Psoas muscle (tissue), 8 donors: ENCODE measurements at regions of chr9 and their contacts with region 1.

Region 1: GRCh38 chr9:99162759-99163364 is 57.9 kb downstream of the TGFBR1 start:
- DNase-seq: no peak
- ATAC-seq: peak in 1 of 4 donors; percentile 56
- H3K4me3 ChIP-seq: no peak overlapping the region
- H3K27ac ChIP-seq: no peak overlapping the region
- H3K4me1 ChIP-seq: no peaks in the 10 kb centered on the region
- H3K27me3 ChIP-seq: no peaks in the 10 kb centered on the region
- CTCF ChIP-seq: peak; percentile 57

Region 2: DNA sequence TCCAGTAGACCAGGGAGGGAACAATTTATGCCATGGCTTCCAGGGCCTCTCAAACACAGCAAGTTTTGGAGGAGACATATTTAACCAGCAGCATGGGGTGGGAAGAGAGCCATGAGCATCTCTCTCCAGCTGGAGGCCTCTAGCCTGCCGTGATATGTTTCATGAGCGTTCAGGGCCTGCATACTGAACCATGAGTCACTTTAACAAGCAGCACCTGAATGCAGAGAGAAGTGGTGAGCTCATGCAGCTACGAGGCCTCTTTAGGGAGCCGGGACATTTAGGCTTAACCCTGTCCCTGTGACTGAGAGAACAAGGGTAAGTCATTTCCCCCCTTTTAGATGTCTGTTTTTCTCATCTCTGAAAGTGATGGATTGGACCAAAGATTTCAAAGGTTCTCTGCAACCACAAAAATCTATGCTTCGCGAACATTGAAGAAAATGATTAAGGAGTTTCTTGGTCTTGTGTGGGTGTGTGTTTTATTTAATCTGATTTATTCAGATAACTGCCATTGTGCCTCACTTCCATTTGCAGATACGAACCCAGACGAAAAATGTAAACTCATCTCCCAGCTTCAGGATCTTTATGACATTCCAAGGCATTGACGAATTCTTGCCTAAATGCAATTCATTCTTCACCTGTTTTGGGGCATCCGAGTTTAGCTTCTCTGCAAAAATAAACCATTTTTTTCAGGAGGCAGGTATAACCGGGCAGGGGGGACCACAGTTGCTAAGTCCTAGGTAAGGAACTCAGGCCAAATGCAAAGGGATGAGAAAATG is 611.2 kb before region 1 on chr9:
- intact Hi-C with region 1: no loop called
- DNase-seq: no peak
- ATAC-seq: no peak
- H3K4me3 ChIP-seq: no peak overlapping the region
- H3K27ac ChIP-seq: no peak overlapping the region
- H3K4me1 ChIP-seq: no peaks in the 10 kb centered on the region
- H3K27me3 ChIP-seq: peaks cover 0 to 5% (median 0%) of the 10 kb centered on the region in 3 donors
- CTCF ChIP-seq: no peak

Region 3: GRCh38 chr9:99085949-99086948 is 76.6 kb before region 1 on chr9:
- intact Hi-C with region 1: no loop called
- DNase-seq: peak in 1 of 2 donors; percentile 35
- ATAC-seq: peak; percentile 43 to 68 (median 59)
- H3K4me3 ChIP-seq: no peak overlapping the region
- H3K27ac ChIP-seq: no peak overlapping the region
- H3K4me1 ChIP-seq: no peaks in the 10 kb centered on the region
- H3K27me3 ChIP-seq: no peaks in the 10 kb centered on the region
- CTCF ChIP-seq: no peak

Region 4: GRCh38 chr9:99118782-99119466 is 43.9 kb before region 1 on chr9:
- intact Hi-C with region 1: no loop called
- DNase-seq: peak in 1 of 2 donors; percentile 43
- ATAC-seq: no peak
- H3K4me3 ChIP-seq: no peak overlapping the region
- H3K27ac ChIP-seq: no peak overlapping the region
- H3K4me1 ChIP-seq: peaks cover 72% of the 10 kb centered on the region
- H3K27me3 ChIP-seq: no peaks in the 10 kb centered on the region
- CTCF ChIP-seq: no peak

Region 5: DNA sequence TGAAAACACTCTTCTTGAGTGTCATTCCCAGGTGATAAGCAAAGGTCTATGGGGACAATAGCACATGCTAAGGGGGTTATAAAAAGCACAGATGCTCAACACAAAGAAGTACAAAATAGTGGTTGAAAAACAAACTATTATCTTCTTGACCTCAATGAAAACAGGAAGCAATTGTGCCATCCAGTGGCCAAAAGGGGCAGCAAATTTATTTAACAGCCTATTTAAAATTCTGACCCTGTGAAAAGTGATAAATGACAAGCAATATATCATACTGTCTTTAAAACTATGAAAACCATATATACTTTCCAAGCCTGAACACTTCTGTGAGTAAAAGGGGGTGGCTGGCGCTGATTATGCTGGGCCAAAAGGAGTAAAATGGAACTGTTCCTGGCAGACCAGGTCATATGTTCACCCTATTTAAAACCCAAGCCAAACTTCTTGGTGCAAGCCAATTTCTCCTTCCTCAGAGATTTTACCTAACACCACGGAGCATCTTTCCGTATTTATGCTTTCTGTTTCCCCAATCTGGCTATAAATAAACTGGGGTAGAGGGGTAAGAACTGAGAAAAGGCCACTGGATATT is 1160.2 kb after region 1 on chr9:
- intact Hi-C with region 1: loop called (anchors 10 kb)
- DNase-seq: no peak
- ATAC-seq: peak in 2 of 4 donors; percentile 46 to 69
- H3K4me3 ChIP-seq: no peak overlapping the region
- H3K27ac ChIP-seq: no peak overlapping the region
- H3K4me1 ChIP-seq: no peaks in the 10 kb centered on the region
- H3K27me3 ChIP-seq: no peaks in the 10 kb centered on the region
- CTCF ChIP-seq: peak; percentile 59